HEK293 (cell line): ENCODE measurements at regions of chr3 and their contacts with region 1.

Region 1: DNA sequence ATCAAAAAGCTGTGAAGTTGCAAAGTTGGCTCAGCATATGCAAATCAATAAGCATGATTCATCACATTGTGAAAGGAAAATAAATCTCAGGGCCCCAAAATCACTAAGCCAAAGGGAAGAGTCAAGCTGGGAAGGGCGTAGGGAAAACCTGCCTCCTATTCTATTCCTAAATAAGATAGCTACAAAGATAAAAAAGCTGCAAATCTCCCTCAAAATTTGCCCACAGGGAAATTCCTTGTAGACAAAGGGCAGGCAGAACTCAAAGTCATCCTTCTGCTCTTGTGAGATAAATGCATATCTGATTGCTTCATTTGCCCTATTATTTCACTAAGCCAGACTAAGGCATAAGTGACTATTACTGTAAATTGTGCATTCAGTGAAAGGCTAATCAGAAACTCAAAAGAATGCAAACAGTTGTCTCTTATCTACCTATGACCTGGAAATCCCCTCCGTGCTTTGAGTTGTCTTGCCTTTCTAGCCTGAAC is 30.5 kb upstream of the CCNL1 start:
- H3K4me3 ChIP-seq: no peak overlapping the region
- H3K27ac ChIP-seq: no peak overlapping the region
- H3K4me1 ChIP-seq: no peaks in the 10 kb centered on the region
- CTCF ChIP-seq: no peak

Region 2: DNA sequence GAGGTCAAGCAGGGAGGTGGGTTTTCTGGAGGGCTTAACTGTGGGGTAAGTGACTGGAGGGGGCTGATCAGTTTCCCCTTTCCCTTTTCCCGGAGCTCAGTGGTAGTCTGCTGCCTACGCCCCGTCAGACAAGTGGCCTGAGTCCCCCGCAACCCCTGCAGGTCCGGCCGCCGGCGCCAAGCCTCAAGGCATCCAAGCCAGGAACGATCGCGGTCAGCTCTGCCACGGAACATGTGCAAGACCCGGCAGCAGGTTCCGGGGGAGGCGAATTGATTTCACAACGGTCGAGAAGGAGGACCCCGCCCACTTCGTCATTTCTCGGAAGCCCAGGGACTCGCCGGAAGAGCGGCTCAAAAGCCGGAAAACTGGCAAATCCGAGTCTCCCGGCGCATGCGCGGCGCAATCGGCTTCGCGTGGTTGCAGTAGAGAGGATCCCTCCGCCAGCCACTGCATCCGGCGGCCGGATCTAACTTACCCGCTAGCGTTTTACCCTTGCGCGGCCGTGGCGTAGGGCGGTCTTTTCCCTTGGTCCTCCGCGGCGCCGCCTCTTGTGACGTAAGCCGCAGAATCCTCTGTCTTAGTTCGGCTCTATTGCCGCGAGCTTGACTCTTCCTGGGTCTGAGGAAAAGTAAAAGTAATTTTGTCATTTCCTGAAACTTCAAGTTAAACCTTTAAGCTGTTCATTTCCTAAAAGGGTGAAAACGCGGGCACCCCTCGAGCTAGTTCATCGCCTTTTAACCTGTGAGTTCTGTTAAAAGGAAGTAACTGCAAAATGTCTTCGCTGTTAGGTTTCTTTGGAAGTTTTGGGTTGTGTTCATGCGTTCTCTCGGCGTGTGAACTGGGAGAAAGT is 15.6 kb before region 1 on chr3:
- CTCF ChIA-PET with region 1: no interaction called
- POLR2A ChIA-PET with region 1: no interaction called
- H3K4me3 ChIP-seq: peak overlapping the region; percentile 62
- H3K27ac ChIP-seq: peak overlapping the region; percentile 68
- H3K4me1 ChIP-seq: no peaks in the 10 kb centered on the region
- CTCF ChIP-seq: no peak

Region 3: GRCh38 chr3:157226173-157226847 is 35.9 kb after region 1 on chr3:
- CTCF ChIA-PET with region 1: no interaction called
- POLR2A ChIA-PET with region 1: no interaction called
- H3K4me3 ChIP-seq: no peak overlapping the region
- H3K27ac ChIP-seq: no peak overlapping the region
- H3K4me1 ChIP-seq: no peaks in the 10 kb centered on the region
- CTCF ChIP-seq: no peak

Region 4: GRCh38 chr3:157559401-157559800 is 369.0 kb after region 1 on chr3:
- CTCF ChIA-PET with region 1: no interaction called
- POLR2A ChIA-PET with region 1: interaction called, 11 read pairs
- H3K4me3 ChIP-seq: no peak overlapping the region
- H3K27ac ChIP-seq: no peak overlapping the region
- H3K4me1 ChIP-seq: no peaks in the 10 kb centered on the region
- CTCF ChIP-seq: no peak